Activated CD8-positive, alpha-beta T cell treated with anti-CD3 and anti-CD28 coated beads for 36 hours (primary cell): ENCODE measurements at regions of chr1 and their contacts with region 1.

Region 1: DNA sequence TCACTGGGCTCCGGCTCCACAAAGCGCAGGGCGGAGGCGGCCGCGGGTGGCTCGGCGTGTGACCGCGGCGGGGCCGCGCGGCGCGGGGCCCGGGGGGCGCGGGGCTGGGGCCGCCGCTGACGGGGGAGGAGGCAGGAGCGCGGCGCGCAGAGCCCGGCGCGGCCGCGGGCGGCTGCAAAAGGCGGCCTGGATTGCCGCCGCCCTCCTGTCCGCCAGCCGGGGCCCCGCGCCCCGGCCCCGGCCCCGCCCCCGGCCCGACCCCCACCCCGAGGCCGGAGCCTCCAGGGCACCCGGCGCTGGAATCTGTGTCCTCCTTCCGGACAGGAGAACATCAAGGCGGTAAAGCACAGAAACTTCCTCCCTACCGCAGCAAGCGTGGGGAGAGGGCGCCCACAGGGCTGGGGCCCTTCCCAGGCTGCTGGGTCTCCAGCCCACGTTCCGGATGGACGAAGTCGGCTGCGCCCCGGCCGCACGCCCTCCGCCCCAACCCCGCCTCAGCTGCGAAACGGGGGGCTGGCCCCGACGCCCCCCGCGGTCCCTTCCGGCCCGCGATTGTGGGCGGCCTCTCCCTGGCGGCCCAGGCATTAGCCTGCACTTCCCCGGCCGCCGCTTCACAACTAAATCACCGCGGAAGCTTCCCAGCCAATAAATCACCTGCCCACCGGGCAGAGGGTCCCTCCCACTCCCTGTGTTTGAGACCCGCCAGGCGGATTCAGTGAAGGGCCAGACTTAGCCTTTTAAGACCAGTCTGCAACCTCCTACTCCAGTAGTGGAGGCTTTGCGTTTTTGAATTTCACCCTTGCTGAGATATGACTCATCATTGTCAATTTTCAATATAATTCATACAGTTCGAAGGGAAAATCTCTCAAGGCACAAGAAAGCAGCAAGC is 106.0 kb downstream of the SLC45A1 start:
- DNase-seq: peak; percentile 81
- ATAC-seq: peak; percentile 68
- H3K4me3 Mint-ChIP-seq: peak overlapping the region; percentile 77
- H3K27ac Mint-ChIP-seq: peak overlapping the region; percentile 93
- H3K4me1 Mint-ChIP-seq: peaks cover 41% of the 10 kb centered on the region
- H3K27me3 Mint-ChIP-seq: no peaks in the 10 kb centered on the region
- CTCF ChIP-seq: no peak

Region 2: GRCh38 chr1:8409106-8409505 is 14.8 kb before region 1 on chr1:
- CTCF ChIA-PET with region 1: interaction called, 47 read pairs
- POLR2A ChIA-PET with region 1: interaction called, 10 read pairs
- intact Hi-C with region 1: no loop called
- DNase-seq: no peak
- ATAC-seq: peak; percentile 49
- H3K4me3 Mint-ChIP-seq: no peak overlapping the region
- H3K27ac Mint-ChIP-seq: peak overlapping the region; percentile 58
- H3K4me1 Mint-ChIP-seq: peaks cover 55% of the 10 kb centered on the region
- H3K27me3 Mint-ChIP-seq: no peaks in the 10 kb centered on the region
- CTCF ChIP-seq: peak; percentile 42

Region 3: DNA sequence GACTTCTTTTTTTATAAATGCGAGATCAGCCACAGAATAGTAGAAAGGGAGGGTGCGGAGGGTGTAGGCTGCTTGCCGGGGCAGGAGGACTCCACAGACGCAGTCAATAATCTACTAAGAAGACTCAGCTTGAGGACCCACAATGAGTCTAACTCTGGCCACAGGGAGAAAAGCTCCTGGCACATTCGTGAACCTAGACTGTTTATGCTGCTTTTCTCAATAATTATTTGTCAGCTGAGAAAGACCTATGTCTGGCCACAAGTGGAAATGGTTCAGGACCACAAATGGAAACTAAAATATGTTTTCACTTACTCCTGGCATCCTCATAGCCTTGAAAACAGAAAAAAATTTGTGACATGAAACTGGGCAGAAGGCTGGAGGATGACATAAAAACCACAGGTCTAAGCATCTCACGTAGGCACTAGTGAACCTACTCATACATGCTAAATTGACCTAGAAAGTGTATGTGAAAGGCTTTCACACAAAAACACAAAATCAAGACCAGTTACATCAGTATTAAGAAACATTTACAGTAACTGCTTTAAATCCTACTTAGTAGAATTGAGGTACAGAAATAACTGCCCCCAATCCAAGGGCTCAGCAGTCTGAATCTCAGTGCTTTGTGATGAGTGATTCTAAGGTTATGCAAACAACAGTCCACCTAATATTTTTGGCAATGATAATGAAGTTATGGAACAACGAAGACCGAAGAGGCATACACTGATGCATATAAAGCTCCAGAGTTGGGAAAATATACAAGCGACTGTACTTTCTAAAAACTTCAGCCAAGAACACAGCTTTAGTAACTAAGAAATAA is 53.5 kb after region 1 on chr1:
- CTCF ChIA-PET with region 1: interaction called, 5 read pairs
- POLR2A ChIA-PET with region 1: interaction called, 3 read pairs
- intact Hi-C with region 1: loop called (anchors 10 kb)
- DNase-seq: peak; percentile 65
- ATAC-seq: peak; percentile 82
- H3K4me3 Mint-ChIP-seq: no peak overlapping the region
- H3K27ac Mint-ChIP-seq: peak overlapping the region; percentile 80
- H3K4me1 Mint-ChIP-seq: peaks cover 50% of the 10 kb centered on the region
- H3K27me3 Mint-ChIP-seq: no peaks in the 10 kb centered on the region
- CTCF ChIP-seq: no peak

Region 4: GRCh38 chr1:8503842-8504241 is 79.9 kb after region 1 on chr1:
- CTCF ChIA-PET with region 1: no interaction called
- POLR2A ChIA-PET with region 1: no interaction called
- intact Hi-C with region 1: no loop called
- DNase-seq: no peak
- ATAC-seq: no peak
- H3K4me3 Mint-ChIP-seq: no peak overlapping the region
- H3K27ac Mint-ChIP-seq: no peak overlapping the region
- H3K4me1 Mint-ChIP-seq: peaks cover 2% of the 10 kb centered on the region
- H3K27me3 Mint-ChIP-seq: no peaks in the 10 kb centered on the region
- CTCF ChIP-seq: no peak

Region 5: GRCh38 chr1:8560611-8561544 is 137.0 kb after region 1 on chr1:
- CTCF ChIA-PET with region 1: no interaction called
- POLR2A ChIA-PET with region 1: no interaction called
- intact Hi-C with region 1: no loop called
- DNase-seq: peak; percentile 25
- ATAC-seq: peak; percentile 83
- H3K4me3 Mint-ChIP-seq: no peak overlapping the region
- H3K27ac Mint-ChIP-seq: peak overlapping the region; percentile 3
- H3K4me1 Mint-ChIP-seq: peaks cover 24% of the 10 kb centered on the region
- H3K27me3 Mint-ChIP-seq: no peaks in the 10 kb centered on the region
- CTCF ChIP-seq: peak; percentile 96